ENCODE measurements at regions of chr19 and their contacts with region 1.

Region 1: GRCh38 chr19:29714953-29715700 is at the start of gene C19orf12:
- DNase-seq: no peak
- H3K4me3 ChIP-seq: peak within 1 kb of the TSS; percentile 79
- H3K27ac ChIP-seq: peak within 1 kb of the TSS; percentile 52
- H3K27me3 ChIP-seq: no peaks in the 10 kb centered on the region
- CTCF ChIP-seq: no peak
- polyA plus RNA-seq, gene C19orf12: 27.1 and 27.9 TPM in 2 replicates

Region 2: GRCh38 chr19:29603308-29603707 is 111.8 kb before region 1 on chr19:
- CTCF ChIA-PET with region 1: interaction called, 550 read pairs
- POLR2A ChIA-PET with region 1: interaction called, 17 read pairs
- DNase-seq: no peak
- H3K4me3 ChIP-seq: no peak overlapping the region
- H3K27ac ChIP-seq: no peak overlapping the region
- H3K27me3 ChIP-seq: peaks cover 2% of the 10 kb centered on the region
- CTCF ChIP-seq: no peak

Region 3: GRCh38 chr19:29622138-29623070 is 92.7 kb before region 1 on chr19:
- CTCF ChIA-PET with region 1: interaction called, 550 read pairs
- POLR2A ChIA-PET with region 1: interaction called, 4 read pairs
- DNase-seq: no peak
- H3K4me3 ChIP-seq: no peak overlapping the region
- H3K27ac ChIP-seq: no peak overlapping the region
- H3K27me3 ChIP-seq: peaks cover 9% of the 10 kb centered on the region
- CTCF ChIP-seq: no peak

Region 4: GRCh38 chr19:29645911-29646310 is 69.2 kb before region 1 on chr19:
- CTCF ChIA-PET with region 1: interaction called, 10 read pairs
- POLR2A ChIA-PET with region 1: no interaction called
- DNase-seq: no peak
- H3K4me3 ChIP-seq: no peak overlapping the region
- H3K27ac ChIP-seq: no peak overlapping the region
- H3K27me3 ChIP-seq: peaks cover 5% of the 10 kb centered on the region
- CTCF ChIP-seq: no peak

Region 5: GRCh38 chr19:29671393-29672160 is 43.5 kb before region 1 on chr19:
- CTCF ChIA-PET with region 1: interaction called, 28 read pairs
- POLR2A ChIA-PET with region 1: no interaction called
- DNase-seq: no peak
- H3K4me3 ChIP-seq: no peak overlapping the region
- H3K27ac ChIP-seq: no peak overlapping the region
- H3K27me3 ChIP-seq: no peaks in the 10 kb centered on the region
- CTCF ChIP-seq: 0 out of 2 replicates have a peak, but pooled peaks have one; percentile 6

Region 6: DNA sequence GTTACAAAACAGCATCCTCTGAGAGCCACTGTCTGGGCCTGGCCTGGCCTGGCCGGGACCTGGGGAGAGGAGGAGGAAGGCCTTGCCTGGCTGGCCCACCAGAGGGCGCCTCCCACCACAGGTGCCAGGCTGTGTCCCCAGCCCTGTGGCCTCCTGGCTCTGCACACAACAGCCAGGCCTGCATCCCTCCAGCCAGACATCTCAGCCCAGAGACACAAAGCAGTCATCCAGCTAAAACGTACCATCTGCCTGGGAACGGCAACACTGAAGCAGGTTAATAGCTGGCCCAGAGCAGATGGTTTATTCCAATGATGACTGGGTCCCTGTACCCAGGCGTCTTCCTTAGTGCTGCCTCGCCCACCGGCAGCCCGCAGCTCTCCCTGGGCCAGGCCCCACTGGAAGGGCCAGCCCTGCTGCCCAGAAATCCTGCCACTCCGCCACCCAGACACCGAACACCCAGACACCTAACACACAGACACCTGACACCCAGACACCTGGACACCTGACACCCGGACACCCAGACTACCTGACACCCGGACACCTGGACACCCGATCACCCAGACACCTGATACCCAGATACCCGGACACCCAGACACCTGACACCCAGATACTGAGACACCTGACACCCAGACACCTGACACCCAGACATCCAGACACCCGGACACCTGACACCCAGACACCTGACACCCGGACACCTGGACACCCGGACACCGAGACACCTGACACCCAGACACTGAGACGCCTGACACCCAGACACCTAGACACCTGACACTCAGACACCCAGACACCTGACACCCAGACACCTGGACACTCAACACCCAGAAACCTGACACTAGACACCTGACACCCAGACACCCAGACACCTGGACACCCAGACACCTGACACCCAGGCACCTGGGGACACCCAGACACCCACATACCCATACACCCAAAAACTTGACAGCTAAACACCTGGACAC is 20.2 kb before region 1 on chr19:
- CTCF ChIA-PET with region 1: interaction called, 87 read pairs
- POLR2A ChIA-PET with region 1: no interaction called
- DNase-seq: no peak
- H3K4me3 ChIP-seq: no peak overlapping the region
- H3K27ac ChIP-seq: no peak overlapping the region
- H3K27me3 ChIP-seq: no peaks in the 10 kb centered on the region
- CTCF ChIP-seq: peak; percentile 91

Region 7: DNA sequence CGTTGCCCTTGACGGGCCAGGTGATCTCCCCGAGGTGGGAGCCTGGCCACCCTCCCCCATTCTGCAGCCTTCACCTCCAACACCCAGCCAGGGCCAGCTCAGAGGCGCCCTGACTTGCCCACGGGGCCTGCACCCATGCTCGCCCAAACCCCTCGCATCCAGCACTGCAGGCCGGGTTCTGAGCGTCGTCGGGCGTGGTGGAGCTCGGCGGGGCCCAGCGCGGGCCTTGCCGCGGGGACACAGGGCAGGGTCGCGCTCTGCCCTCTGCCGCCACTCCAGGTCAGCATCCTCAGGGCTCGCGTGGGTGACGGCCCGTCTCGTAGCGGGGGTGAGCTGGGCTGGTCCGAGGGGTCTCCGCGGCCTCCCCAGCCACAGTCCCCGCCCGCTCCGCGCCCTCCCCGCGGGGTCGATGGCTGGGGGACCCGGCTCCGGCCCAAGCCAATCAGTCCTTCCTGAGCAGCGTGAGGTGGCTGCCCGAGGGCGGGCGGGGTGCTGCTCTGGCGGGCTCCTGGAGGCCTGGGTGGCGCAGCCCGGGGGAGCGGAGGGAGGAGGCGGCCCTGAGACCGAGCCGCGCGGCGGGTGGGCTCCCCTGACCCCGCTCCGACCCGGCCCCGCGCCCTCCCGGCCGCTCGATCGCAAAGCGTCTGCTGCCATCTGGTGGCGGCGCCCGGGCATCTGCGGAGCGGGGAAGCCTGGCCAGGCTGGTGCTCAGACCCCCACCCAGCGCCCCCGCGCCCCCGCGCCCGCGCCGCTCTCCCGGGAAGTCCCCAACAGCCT is 158.1 kb after region 1 on chr19:
- CTCF ChIA-PET with region 1: interaction called, 10 read pairs
- POLR2A ChIA-PET with region 1: no interaction called
- DNase-seq: no peak
- H3K4me3 ChIP-seq: peak overlapping the region; percentile 41; the same call in 1 of the 2 replicates
- H3K27ac ChIP-seq: no peak overlapping the region
- H3K27me3 ChIP-seq: peaks cover 4% of the 10 kb centered on the region
- CTCF ChIP-seq: peak; percentile 56

Measured in AG04450 (cell line).